CD8-positive, alpha-beta T cell (primary cell): ENCODE measurements at regions of chr1 and their contacts with region 1.

Region 1: DNA sequence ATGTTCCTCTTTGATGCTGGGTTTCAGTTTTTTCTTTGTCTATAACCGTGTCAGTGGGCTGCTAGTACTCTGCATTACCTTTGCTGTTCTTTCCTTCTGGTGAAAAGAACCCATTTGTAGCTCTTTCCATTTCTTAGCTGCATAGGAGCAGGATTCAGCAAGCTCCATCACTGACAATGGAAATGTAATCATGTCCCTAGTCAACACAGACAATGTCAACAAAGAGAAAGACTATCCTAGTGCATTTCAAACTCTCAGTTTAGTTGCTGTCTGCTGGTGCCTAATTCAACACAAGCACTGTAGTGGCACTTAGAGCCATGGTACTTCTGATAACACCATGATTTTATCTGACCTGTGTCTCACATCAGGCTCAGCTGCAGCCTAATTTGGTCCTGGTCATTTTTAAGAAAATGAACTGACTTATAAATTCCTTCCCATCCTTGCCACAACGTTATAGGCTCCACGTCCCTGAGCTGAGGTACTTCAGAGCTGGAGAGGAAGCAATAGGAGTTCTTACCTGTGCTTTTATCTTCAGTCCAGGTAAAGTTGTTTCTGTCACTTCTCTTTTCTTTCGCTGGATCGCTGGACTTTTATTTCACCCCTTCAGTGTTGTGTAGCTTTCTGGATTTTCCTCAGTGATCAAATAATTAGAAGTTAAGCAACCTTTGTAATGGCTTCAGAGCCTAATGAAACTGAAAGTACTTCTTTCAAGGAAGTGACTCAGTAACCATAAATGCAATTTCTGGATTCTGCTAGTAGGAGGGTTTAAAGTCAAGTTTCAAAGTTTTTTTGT is at the start of gene GBP3:
- DNase-seq: peak in 3 of 9 experiments; percentile 14 to 73 (median 54)
- ATAC-seq: peak; percentile 83
- H3K4me3 ChIP-seq: peak within 1 kb of the TSS; percentile 52 to 59
- H3K4me3 Mint-ChIP-seq: peak within 1 kb of the TSS; percentile 89
- H3K27ac ChIP-seq: peak within 1 kb of the TSS; percentile 50 to 87
- H3K27ac Mint-ChIP-seq: peak within 1 kb of the TSS; percentile 94
- H3K4me1 ChIP-seq: peaks cover 23% of the 10 kb centered on the region
- H3K4me1 Mint-ChIP-seq: peaks cover 47% of the 10 kb centered on the region
- H3K27me3 ChIP-seq: no peaks in the 10 kb centered on the region
- H3K27me3 Mint-ChIP-seq: no peaks in the 10 kb centered on the region
- CTCF ChIP-seq: no peak
- total RNA-seq, gene GBP3: 18.6 to 21.6 TPM

Region 2: GRCh38 chr1:89005286-89006151 is 16.8 kb before region 1 on chr1:
- CTCF ChIA-PET with region 1: interaction called, 7 read pairs
- POLR2A ChIA-PET with region 1: interaction called, 4 read pairs
- intact Hi-C with region 1: loop called (anchors 1 to 2 kb)
- DNase-seq: no peak
- ATAC-seq: no peak
- H3K4me3 ChIP-seq: no peak overlapping the region
- H3K4me3 Mint-ChIP-seq: no peak overlapping the region
- H3K27ac ChIP-seq: no peak overlapping the region
- H3K27ac Mint-ChIP-seq: no peak overlapping the region
- H3K4me1 ChIP-seq: peaks cover 24% of the 10 kb centered on the region
- H3K4me1 Mint-ChIP-seq: peaks cover 40% of the 10 kb centered on the region
- H3K27me3 ChIP-seq: no peaks in the 10 kb centered on the region
- H3K27me3 Mint-ChIP-seq: no peaks in the 10 kb centered on the region
- CTCF ChIP-seq: no peak

Region 3: GRCh38 chr1:89065079-89065868 is 42.9 kb after region 1 on chr1 and contains the start of gene GBP1:
- CTCF ChIA-PET with region 1: interaction called, 4 read pairs
- POLR2A ChIA-PET with region 1: interaction called, 6 read pairs
- intact Hi-C with region 1: loop called (anchors 2 to 5 kb)
- DNase-seq: peak in 2 of 9 experiments; percentile 63 to 78
- ATAC-seq: peak; percentile 85
- H3K4me3 ChIP-seq: peak within 1 kb of the TSS; percentile 60 to 68
- H3K4me3 Mint-ChIP-seq: peak within 1 kb of the TSS; percentile 98
- H3K27ac ChIP-seq: peak within 1 kb of the TSS; percentile 65 to 80
- H3K27ac Mint-ChIP-seq: peak within 1 kb of the TSS; percentile 98
- H3K4me1 ChIP-seq: peaks cover 35% of the 10 kb centered on the region
- H3K4me1 Mint-ChIP-seq: peaks cover 63% of the 10 kb centered on the region
- H3K27me3 ChIP-seq: no peaks in the 10 kb centered on the region
- H3K27me3 Mint-ChIP-seq: no peaks in the 10 kb centered on the region
- CTCF ChIP-seq: no peak
- total RNA-seq, gene GBP1: 20.8 to 25.9 TPM